Dorsolateral prefrontal cortex (tissue), 120 donors: ENCODE measurements at regions of chr2 and their contacts with region 1.

Region 1: DNA sequence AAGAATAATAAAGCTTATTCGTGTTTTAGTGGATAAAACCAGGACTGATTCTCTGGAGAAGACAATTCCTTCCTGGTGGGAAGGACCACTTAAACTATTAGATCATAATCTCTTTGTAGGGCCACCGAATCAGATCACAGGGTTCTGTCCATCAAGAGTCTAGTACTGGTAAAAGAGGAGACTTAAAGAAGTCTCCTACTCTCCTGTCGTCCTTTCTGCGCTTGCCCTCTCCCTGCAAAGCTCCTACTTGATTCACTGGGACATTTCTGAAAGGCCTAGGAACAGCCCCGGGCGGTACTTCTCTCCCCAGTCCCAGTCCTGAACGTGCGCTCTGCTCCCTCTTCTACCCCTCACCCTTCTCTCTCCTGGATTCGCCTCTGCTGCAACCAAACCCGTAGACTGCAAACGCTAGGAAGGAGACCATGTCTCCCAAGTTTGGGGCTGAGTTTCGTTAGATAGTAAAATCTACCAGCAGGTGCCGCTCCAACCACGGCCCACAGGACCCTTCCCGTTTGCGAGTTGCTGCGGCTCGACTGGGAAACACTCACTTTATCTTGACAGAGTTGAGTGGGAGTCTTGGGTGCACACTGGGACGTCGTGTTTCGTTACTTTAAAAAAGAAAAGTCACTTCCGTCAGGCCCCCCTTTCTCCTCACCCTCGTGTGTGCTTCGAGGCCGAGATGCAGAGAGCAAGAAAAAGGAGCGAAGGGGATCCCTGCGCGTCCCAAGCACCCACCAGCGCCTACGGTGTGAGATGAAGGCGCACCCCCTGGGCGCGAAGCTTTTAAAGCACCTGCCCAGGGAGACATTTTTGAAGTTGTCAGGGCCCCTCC is 923 bp downstream of the FIGLA start:
- DNase-seq: peak; percentile 57 to 82 (median 72)
- H3K4me3 ChIP-seq: peak overlapping the region in 55 of 59 donors; percentile 3 to 62 (median 43)
- H3K27ac ChIP-seq: no peak overlapping the region
- H3K27me3 ChIP-seq: peaks cover 0 to 80% (median 40%) of the 10 kb centered on the region in 45 donors
- CTCF ChIP-seq: peak in 55 of 56 donors; percentile 44 to 85 (median 71)

Region 2: GRCh38 chr2:70173520-70173919 is 616.0 kb before region 1 on chr2:
- intact Hi-C with region 1: no loop called
- DNase-seq: no peak
- H3K4me3 ChIP-seq: no peak overlapping the region
- H3K27ac ChIP-seq: no peak overlapping the region
- H3K27me3 ChIP-seq: no peaks in the 10 kb centered on the region
- CTCF ChIP-seq: no peak

Region 3: DNA sequence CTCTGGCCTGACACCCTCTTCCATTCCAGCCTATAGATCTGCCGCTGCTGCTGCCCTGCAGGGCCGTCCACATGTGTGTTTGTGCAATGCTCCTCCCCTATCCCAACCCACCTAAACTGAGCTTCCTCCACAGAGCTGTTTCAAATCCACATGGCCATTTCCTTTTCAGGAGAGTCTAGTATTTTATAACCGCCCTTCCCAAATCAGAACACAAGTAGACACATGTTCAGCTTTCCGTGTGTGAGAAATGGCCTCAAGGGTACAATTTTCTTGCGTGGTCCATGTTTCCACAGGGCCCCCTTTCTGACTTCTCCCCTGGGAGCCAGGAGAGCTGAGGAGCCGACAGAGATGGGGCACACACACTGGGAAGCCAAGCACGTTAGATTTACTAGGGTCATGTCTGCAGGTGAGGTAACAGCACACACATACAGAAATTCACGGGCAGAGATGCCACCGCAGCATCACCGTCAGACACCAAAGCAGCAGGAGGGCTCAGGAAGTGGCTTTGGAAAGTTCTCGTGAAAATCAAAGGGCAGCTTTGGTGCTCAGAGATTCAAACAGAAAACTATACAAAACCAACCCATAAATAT is 133.0 kb before region 1 on chr2:
- intact Hi-C with region 1: loop called (anchors 2 to 5 kb)
- DNase-seq: no peak
- H3K4me3 ChIP-seq: no peak overlapping the region
- H3K27ac ChIP-seq: no peak overlapping the region
- H3K27me3 ChIP-seq: peaks cover 0 to 15% (median 0%) of the 10 kb centered on the region in 45 donors
- CTCF ChIP-seq: no peak

Region 4: GRCh38 chr2:70861777-70862625 is 72.5 kb after region 1 on chr2:
- intact Hi-C with region 1: loop called in 1 of 2 experiments (anchors 5 kb)
- DNase-seq: peak; percentile 60 to 87 (median 78)
- H3K4me3 ChIP-seq: peak overlapping the region in 1 of 59 donors; percentile 31
- H3K27ac ChIP-seq: no peak overlapping the region
- H3K27me3 ChIP-seq: peaks cover 0 to 51% (median 27%) of the 10 kb centered on the region in 45 donors
- CTCF ChIP-seq: peak; percentile 55 to 98 (median 91)

Region 5: GRCh38 chr2:70919672-70920366 is 130.3 kb after region 1 on chr2:
- intact Hi-C with region 1: loop called in 1 of 2 experiments (anchors 10 kb)
- DNase-seq: peak in 8 of 10 donors; percentile 45 to 80 (median 66)
- H3K4me3 ChIP-seq: no peak overlapping the region
- H3K27ac ChIP-seq: no peak overlapping the region
- H3K27me3 ChIP-seq: peaks cover 0 to 29% (median 4%) of the 10 kb centered on the region in 45 donors
- CTCF ChIP-seq: peak; percentile 52 to 92 (median 81)

Region 6: DNA sequence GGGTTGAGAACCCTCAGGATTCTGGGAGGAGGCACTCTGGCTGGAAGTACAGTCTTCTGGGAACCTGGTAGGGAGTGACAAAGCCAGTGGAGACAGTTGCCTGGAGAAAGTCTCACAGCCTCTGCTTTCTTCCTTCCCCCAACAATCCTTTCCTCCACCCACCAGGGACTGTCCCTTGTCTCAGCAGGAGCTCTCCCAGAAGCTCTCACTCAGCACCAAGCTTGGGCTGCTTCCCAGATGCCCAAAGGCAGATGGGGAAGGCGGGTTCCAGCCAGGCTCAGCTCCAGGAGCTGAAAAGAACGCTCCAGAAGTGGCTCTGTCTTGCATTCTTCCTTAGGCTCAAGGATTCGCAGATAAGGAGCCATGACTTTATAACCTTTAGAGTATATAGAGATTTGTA is 271.4 kb after region 1 on chr2:
- intact Hi-C with region 1: no loop called
- DNase-seq: peak in 7 of 10 donors; percentile 44 to 76 (median 66)
- H3K4me3 ChIP-seq: no peak overlapping the region
- H3K27ac ChIP-seq: peak overlapping the region in 16 of 59 donors; percentile 1 to 81 (median 46)
- H3K27me3 ChIP-seq: no peaks in the 10 kb centered on the region
- CTCF ChIP-seq: no peak

Region 7: GRCh38 chr2:71727567-71727966 is 938.0 kb after region 1 on chr2:
- intact Hi-C with region 1: no loop called
- DNase-seq: no peak
- H3K4me3 ChIP-seq: no peak overlapping the region
- H3K27ac ChIP-seq: no peak overlapping the region
- H3K27me3 ChIP-seq: no peaks in the 10 kb centered on the region
- CTCF ChIP-seq: no peak